HEK293T (cell line): ENCODE measurements at regions of chrX and their contacts with region 1.

Region 1: DNA sequence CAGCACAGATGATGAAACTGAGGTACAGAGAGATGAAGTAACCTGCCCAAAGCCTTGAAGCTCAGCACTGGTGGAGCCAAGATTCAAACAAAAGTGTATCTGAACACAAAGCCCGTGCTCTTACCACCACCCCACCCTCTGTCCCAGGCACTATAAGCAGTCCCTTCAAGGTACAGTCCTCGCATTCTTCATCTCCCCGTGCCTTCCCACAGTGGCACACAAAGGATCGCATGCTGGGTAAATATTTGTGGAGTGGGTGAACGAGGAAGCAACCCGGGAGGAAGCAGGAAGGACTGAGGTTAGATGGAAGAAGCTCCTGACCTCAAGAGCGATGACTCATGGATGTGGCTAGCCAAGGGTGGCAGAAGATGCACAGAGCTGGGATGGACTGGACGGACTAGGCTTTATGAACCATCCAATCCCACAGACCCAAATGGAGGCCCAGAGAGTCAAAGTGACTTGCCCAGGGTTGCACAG is 18.4 kb downstream of the IQSEC2 start:
- DNase-seq: no peak

Region 2: GRCh38 chrX:53281321-53281822 is 18.4 kb after region 1 on chrX and contains the start of gene IQSEC2:
- CTCF ChIA-PET with region 1: interaction called, 10 read pairs
- POLR2A ChIA-PET with region 1: interaction called, 3 read pairs
- DNase-seq: peak; percentile 77